ENCODE measurements at regions of chr2 and their contacts with region 1.

Region 1: GRCh38 chr2:164560181-164560792 is 61.0 kb downstream of the GRB14 start:
- DNase-seq: peak; percentile 53
- H3K4me3 ChIP-seq: no peak overlapping the region
- H3K27ac ChIP-seq: no peak overlapping the region
- H3K4me1 ChIP-seq: no peaks in the 10 kb centered on the region
- H3K27me3 ChIP-seq: no peaks in the 10 kb centered on the region
- CTCF ChIP-seq: peak; percentile 89

Region 2: GRCh38 chr2:164574925-164575324 is 14.6 kb after region 1 on chr2:
- CTCF ChIA-PET with region 1: no interaction called
- POLR2A ChIA-PET with region 1: interaction called, 11 read pairs
- intact Hi-C with region 1: no loop called
- DNase-seq: no peak
- H3K4me3 ChIP-seq: no peak overlapping the region
- H3K27ac ChIP-seq: no peak overlapping the region
- H3K4me1 ChIP-seq: no peaks in the 10 kb centered on the region
- H3K27me3 ChIP-seq: no peaks in the 10 kb centered on the region
- CTCF ChIP-seq: no peak; the same call in 1 of the 2 replicates

Region 3: DNA sequence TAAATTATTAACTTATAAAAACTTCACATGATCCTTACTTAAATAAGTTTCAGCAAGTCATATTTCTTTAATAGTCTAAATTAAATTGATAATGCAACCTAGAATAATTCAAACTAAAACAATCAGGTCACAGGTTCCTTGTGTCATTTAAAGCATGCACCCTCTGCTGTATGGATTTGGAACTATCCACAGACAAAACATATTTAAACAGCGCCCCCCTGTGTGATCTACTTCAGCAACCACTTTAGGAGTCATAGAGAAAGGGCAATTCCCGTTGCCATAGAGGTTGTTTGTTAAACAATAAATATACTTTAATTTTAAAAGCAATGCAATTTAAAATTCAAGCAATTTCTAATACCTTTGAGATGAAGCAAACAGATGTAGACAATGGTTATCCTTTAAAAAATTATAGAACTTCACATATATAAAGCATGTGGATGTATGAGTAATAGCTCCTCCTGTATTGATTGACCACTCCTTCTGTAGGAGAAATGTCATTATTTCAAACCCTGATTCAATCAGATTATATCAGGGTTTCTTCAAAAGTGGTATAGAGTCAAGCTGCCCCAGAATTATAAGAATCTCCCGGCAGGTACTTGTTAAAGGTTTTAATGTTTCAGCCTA is 39.8 kb after region 1 on chr2:
- CTCF ChIA-PET with region 1: interaction called, 6 read pairs
- POLR2A ChIA-PET with region 1: no interaction called
- intact Hi-C with region 1: loop called (anchors 1 kb)
- DNase-seq: peak; percentile 84
- H3K4me3 ChIP-seq: no peak overlapping the region
- H3K27ac ChIP-seq: no peak overlapping the region
- H3K4me1 ChIP-seq: no peaks in the 10 kb centered on the region
- H3K27me3 ChIP-seq: no peaks in the 10 kb centered on the region
- CTCF ChIP-seq: peak; percentile 99

Region 4: GRCh38 chr2:164717000-164717803 is 156.9 kb after region 1 on chr2:
- CTCF ChIA-PET with region 1: interaction called, 4 read pairs
- POLR2A ChIA-PET with region 1: no interaction called
- intact Hi-C with region 1: loop called (anchors 2 kb)
- DNase-seq: peak; percentile 64
- H3K4me3 ChIP-seq: no peak overlapping the region
- H3K27ac ChIP-seq: no peak overlapping the region
- H3K4me1 ChIP-seq: peaks cover 6% of the 10 kb centered on the region
- H3K27me3 ChIP-seq: no peaks in the 10 kb centered on the region
- CTCF ChIP-seq: peak; percentile 77

Measured in A673 (cell line).